PC-3 (cell line): ENCODE measurements at regions of chr11 and their contacts with region 1.

Region 1: DNA sequence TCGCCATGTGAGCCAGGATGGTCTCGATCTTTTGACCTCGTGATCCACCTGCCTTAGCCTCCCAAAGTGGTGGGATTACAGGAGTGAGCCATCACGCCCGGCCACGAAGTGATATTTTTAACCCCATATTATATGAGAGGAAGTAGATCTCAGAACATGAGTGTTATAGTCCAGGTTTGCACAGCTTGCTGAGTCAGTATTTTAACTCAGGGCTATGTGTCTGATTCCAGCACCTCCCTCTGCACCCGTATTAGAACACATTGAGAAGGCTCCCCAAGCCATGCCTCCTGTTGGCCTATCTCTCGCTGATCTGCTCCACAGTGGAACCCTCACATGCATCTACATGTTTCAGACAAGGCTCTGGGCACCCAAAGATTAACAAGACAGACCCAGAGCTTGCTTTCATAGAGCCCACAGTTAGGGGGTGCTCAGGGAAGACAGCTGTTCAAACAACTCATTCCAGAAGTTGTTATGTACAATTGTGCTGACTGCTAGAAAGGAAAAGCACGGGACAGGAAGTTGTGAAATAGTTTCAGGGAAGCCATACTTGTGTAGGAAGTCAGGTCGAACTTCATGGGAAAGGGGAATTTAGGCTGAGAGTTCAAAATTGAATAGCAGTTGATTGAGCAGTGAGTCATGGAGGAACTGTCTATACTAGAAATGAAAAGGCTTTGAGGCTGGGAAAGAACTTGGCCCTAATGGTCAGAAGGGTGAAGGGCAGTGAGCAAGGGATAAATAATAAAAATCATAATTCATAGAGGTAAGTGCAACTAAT is 49.3 kb upstream of the CLPB start:
- DNase-seq: peak; percentile 55
- ATAC-seq: no peak
- H3K4me3 ChIP-seq: no peak overlapping the region
- H3K27ac ChIP-seq: peak overlapping the region; percentile 36; the same call in 1 of the 2 replicates
- H3K4me1 ChIP-seq: peaks cover 7% of the 10 kb centered on the region
- H3K27me3 ChIP-seq: peaks cover 15% of the 10 kb centered on the region; the same call in 1 of the 2 replicates
- CTCF ChIP-seq: no peak

Region 2: DNA sequence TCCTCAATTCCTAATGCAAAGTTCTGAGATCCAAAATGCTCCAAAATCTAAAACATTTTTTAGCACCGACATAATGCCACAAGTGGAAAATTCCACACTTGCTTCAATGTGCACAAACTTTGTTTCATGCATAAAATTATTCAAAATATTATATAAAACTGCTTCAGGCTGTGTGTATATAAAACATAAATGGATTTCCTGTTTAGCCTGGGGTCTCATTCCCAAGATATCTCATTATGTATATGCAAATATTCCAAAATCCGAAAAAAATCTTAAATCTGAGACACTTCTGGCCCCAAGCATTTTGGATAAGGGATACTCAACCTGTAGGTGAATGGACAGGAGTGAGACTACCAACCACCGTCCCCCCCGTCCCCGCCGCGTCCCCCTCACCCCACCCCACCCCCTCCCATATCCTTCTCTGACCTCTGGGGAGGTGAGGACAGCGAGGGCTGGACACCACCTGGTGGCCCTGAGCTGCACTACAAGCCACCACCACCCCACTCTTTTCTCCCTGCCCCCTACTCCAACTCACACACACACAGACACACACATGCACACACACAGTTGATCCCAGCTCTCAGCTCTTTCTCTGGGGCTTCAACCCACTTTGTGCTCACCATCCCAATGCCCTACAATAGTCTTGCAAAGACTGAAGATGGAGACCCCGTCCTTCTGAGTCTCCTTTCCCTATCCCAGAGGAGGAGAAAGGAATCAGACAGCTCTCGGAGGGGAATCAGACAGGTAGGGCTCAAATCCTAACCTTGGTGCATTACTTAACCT is 89.7 kb after region 1 on chr11:
- CTCF ChIA-PET with region 1: interaction called, 6 read pairs
- POLR2A ChIA-PET with region 1: no interaction called
- intact Hi-C with region 1: loop called (anchors 1 kb)
- DNase-seq: peak; percentile 59
- ATAC-seq: peak; percentile 53
- H3K4me3 ChIP-seq: no peak overlapping the region
- H3K27ac ChIP-seq: no peak overlapping the region
- H3K4me1 ChIP-seq: peaks cover 25% of the 10 kb centered on the region
- H3K27me3 ChIP-seq: no peaks in the 10 kb centered on the region
- CTCF ChIP-seq: peak; percentile 68